ENCODE measurements at regions of chr11 and their contacts with region 1.

Region 1: DNA sequence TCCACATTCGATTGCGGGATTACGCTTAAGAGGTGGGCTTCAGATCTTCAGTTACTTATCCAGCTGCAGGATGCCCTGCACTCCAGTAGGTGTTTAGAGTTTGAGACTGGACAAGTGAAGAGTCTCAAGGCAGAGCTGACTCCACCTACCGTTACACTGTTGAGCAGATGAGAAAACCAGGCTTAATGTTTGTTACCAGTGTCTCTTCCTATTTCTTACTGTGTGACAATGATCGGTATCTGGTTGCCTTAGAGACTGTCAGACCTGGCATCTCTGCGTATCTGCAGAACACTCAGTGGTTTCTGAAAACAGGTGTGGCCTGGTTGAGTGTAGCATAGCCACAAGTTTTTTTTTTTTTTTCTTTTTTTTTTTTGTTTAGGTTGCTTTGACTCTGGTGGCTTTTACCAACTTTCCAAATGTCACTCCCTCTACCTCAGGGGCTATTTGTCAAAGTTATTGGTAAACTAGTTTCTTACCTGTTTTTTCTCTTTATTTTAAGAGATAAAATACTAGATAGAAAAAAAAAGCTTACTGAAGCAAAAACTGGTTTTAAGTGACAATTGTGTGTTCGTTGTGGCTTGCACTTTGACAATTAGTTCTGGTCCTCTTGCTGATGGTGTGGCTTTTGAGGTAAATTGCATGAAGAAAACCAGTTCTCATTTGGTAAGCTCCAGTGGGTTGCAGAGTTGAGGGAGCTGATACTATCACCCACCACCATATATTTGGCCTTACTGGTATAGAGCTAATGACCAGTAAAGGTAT is 284.8 kb downstream of the ETS1 start:
- DNase-seq: peak; percentile 51 to 95
- ATAC-seq: peak; percentile 81 to 95 (median 88)
- H3K4me3 ChIP-seq: peak overlapping the region; percentile 20
- H3K4me3 Mint-ChIP-seq: peak overlapping the region; percentile 87
- H3K27ac ChIP-seq: peak overlapping the region; percentile 88
- H3K27ac Mint-ChIP-seq: peak overlapping the region; percentile 96 to 99
- H3K4me1 ChIP-seq: peaks cover 52% of the 10 kb centered on the region
- H3K4me1 Mint-ChIP-seq: peaks cover 85 to 89% of the 10 kb centered on the region in 2 donors
- H3K27me3 ChIP-seq: no peaks in the 10 kb centered on the region
- H3K27me3 Mint-ChIP-seq: no peaks in the 10 kb centered on the region
- CTCF ChIP-seq: peak; percentile 23

Region 2: DNA sequence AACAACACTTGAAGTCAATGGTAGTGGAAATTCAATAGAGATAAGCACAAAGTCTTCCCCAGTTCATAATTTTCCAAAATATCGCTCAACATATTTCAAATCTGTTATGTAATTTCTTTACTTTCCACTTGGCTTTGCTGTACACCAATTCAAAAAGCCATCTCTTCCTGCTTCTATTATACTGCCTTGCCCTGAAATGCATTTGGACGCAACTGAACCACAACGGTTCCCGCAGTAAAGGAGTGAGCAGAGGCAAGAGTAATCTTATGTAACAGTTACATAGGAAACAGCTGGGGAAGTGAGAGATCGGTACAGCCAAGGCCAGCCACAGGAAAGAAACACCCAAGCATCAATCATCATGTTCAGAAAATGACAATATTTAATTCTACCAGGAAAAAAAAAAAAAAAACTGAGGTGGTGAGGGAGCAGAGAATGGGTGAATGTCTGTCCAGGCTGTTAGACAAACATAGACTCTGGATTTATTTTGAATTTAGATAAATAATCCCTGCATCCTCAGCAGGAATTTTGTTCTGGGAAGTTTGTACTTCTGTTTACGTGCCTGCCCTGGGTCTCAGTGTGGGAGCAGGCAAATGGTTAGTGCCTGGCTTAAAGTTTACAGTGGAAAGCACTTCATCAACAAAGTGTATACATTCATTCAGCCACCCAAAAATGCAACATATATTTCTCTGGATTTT is 107.4 kb before region 1 on chr11:
- intact Hi-C with region 1: loop called (anchors 5 kb)
- DNase-seq: peak in 1 of 2 donors; percentile 83
- ATAC-seq: peak; percentile 60 to 70 (median 61)
- H3K4me3 ChIP-seq: no peak overlapping the region
- H3K4me3 Mint-ChIP-seq: peak overlapping the region; percentile 67
- H3K27ac ChIP-seq: no peak overlapping the region
- H3K27ac Mint-ChIP-seq: peak overlapping the region; percentile 74 to 76
- H3K4me1 ChIP-seq: peaks cover 33% of the 10 kb centered on the region
- H3K4me1 Mint-ChIP-seq: peaks cover 67 to 75% of the 10 kb centered on the region in 2 donors
- H3K27me3 ChIP-seq: no peaks in the 10 kb centered on the region
- H3K27me3 Mint-ChIP-seq: no peaks in the 10 kb centered on the region
- CTCF ChIP-seq: no peak

Region 3: GRCh38 chr11:128725630-128726319 is 423.2 kb after region 1 on chr11:
- intact Hi-C with region 1: loop called (anchors 5 kb)
- DNase-seq: peak; percentile 54 to 92
- ATAC-seq: peak; percentile 65 to 75 (median 70)
- H3K4me3 ChIP-seq: peak overlapping the region; percentile 16
- H3K4me3 Mint-ChIP-seq: peak overlapping the region; percentile 74
- H3K27ac ChIP-seq: peak overlapping the region; percentile 72
- H3K27ac Mint-ChIP-seq: peak overlapping the region; percentile 86 to 94
- H3K4me1 ChIP-seq: peaks cover 99% of the 10 kb centered on the region
- H3K4me1 Mint-ChIP-seq: peaks cover 98 to 100% of the 10 kb centered on the region in 2 donors
- H3K27me3 ChIP-seq: no peaks in the 10 kb centered on the region
- H3K27me3 Mint-ChIP-seq: peaks cover 0 to 3% of the 10 kb centered on the region in 2 donors
- CTCF ChIP-seq: no peak